Panc1 (cell line): ENCODE measurements at regions of chr7 and their contacts with region 1.

Region 1: DNA sequence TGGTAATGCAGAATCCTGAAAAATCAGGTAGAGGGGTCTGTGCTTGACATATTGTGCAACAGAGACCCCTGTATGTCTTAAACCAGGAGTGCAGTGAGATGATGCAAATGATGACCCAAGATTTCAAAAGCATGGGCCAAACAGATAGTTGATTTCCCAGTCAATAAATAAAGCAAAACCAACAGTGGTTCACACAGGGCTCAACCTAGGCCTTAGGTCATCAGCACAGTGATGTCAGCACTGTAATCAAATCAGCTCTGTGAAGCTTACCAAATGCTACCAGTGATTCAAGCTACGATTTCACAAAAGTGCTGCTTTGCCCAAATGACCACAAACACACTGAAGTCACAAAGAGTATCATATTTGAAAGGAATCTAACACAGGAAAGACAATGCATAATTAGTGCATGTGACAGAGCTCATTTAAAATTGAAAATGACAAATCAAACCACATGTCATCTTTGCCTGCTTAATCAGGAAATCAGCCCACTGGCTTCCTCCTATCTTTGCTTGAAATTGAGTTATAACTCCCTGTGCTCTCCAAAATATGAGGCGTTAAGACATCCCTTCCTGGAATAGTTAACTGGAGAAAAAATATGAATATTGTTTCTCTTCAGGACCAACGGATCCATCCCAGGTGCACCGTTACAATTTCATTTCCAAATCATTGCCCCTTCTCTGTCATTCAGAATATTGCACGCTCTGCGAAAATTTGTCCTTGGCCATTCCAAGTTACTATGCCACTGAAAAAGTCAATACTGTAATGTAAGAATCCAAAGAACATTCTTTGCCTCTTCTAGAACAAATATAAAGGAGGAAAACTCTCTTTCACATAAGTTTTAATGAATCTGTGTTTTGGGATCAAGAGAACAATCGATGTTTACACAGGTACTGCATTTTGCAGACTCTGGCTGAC is 41.9 kb upstream of the ASL start:
- DNase-seq: no peak
- ATAC-seq: no peak
- H3K4me3 ChIP-seq: no peak overlapping the region
- H3K27ac ChIP-seq: no peak overlapping the region
- H3K4me1 ChIP-seq: no peaks in the 10 kb centered on the region
- H3K27me3 ChIP-seq: no peaks in the 10 kb centered on the region
- CTCF ChIP-seq: no peak

Region 2: GRCh38 chr7:65971021-65971420 is 62.7 kb before region 1 on chr7:
- CTCF ChIA-PET with region 1: no interaction called
- POLR2A ChIA-PET with region 1: no interaction called
- in situ Hi-C with region 1: no loop called
- intact Hi-C with region 1: no loop called
- DNase-seq: no peak
- ATAC-seq: no peak
- H3K4me3 ChIP-seq: no peak overlapping the region
- H3K27ac ChIP-seq: no peak overlapping the region
- H3K4me1 ChIP-seq: no peaks in the 10 kb centered on the region
- H3K27me3 ChIP-seq: no peaks in the 10 kb centered on the region
- CTCF ChIP-seq: no peak

Region 3: DNA sequence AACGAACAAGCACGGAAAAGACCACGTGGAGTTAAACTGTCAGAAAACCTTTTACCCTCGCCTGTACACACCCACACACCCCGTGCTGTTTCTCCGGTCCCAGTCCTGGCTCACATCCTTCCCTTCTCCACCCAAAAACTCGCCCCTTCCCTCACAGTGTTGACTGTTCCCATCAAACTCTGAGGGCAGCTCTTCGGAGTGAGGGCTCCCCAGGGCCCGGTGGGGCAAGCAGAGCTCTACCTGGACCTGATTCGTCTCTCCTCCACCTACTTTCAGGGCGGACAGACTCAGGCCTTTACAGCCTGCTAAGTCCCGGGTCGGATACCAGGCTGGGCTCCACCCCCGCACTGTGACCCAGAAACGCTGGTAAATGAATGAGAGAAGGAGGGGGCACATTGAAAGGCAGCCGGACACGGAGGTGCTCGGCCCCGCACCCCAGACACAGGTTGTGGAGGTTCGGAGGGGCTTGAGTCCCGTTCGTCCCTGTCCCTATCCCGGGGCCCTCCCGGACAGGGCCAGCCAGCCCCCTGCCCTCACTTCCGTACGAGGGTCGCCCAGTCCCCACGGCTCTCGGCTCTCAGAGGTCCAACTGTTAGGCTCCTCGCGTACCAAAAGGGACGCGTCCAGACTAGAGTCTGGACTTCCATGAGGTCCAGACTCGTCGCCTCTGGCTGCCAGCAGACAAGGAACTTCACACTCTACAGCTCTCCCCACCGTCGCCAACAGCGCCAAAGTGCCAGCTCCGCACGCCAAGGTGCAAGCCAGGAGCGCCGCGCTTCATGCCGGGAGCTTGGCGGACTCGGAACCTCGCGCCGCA is 10.2 kb after region 1 on chr7:
- CTCF ChIA-PET with region 1: interaction called, 21 read pairs
- POLR2A ChIA-PET with region 1: interaction called, 4 read pairs
- in situ Hi-C with region 1: no loop called
- intact Hi-C with region 1: no loop called
- DNase-seq: no peak
- ATAC-seq: peak; percentile 91
- H3K4me3 ChIP-seq: peak overlapping the region; percentile 42 to 71
- H3K27ac ChIP-seq: peak overlapping the region; percentile 63
- H3K4me1 ChIP-seq: 0 out of 2 replicates have a peak, but pooled peaks cover 3% of the 10 kb centered on the region
- H3K27me3 ChIP-seq: no peaks in the 10 kb centered on the region
- CTCF ChIP-seq: no peak

Region 4: DNA sequence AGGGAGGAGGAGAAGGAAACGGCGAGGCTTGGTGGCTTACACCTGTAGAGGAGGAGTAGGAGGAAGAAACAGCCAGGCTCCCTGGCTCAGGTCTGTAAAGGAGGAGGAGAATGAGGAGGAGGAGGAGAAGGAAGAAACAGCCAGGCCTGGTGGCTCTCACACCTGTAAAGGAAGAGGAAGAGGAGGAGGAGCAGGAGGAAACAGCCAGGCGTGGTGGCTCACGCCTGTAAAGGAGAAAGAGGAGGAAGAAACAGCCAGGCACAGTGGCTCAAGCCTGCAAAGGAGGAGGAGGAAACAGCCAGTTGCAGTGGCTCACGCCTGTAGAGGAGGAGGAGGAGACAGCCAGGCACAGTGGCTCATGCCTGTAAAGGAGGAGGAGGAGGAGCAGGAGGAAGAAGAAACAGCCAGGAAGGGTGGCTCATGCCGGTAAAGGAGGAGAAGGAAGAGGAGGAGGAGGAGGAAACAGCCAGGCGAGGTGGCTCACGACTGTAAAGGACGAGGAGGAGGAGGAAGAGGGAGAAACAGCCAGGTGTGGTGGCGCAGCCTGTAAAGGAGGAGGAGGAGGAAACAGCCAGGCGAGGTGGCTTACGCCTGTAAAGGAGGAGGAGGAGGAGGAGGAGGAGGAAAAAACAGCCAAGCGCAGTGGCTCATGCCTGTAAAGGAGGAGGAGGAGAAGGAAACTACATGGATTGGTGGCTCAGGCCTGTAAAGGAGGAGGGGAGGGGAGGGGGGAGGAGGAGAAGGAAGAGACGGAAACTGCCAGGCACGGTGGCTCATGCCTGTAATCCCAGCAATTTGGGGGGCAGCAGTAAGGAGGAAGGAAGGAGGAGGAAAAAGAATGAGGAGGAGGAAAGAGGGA is 66.1 kb after region 1 on chr7:
- CTCF ChIA-PET with region 1: interaction called, 16 read pairs
- POLR2A ChIA-PET with region 1: no interaction called
- in situ Hi-C with region 1: no loop called
- intact Hi-C with region 1: no loop called
- DNase-seq: no peak
- ATAC-seq: peak; percentile 95
- H3K4me3 ChIP-seq: peak overlapping the region; percentile 48 to 77
- H3K27ac ChIP-seq: peak overlapping the region; percentile 98
- H3K4me1 ChIP-seq: no peaks in the 10 kb centered on the region; the same call in 1 of the 2 replicates
- H3K27me3 ChIP-seq: no peaks in the 10 kb centered on the region
- CTCF ChIP-seq: no peak

Region 5: DNA sequence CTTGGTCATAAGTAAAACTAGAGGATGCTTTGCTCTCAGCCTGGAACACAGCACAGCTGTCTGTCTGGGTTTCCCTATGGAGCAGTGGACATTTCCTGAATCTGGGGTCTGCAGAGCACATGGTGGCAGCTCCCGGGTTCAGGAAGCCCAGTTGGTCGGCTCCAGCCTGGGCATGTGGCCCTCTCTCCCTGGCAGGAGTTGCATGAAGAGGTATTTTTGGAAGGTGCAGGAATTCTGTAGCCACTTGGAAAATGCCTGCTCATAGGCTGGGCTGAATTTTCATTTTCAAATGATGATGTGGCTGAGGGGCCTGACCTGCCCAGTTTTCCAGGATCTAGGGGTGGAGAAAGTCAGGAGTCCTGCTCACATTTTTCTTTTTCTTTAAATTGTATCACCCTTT is 164.7 kb after region 1 on chr7:
- CTCF ChIA-PET with region 1: interaction called, 16 read pairs
- POLR2A ChIA-PET with region 1: no interaction called
- in situ Hi-C with region 1: no loop called
- intact Hi-C with region 1: no loop called
- DNase-seq: no peak
- ATAC-seq: 0 out of 2 replicates have a peak, but pooled peaks have one; percentile 13
- H3K4me3 ChIP-seq: no peak overlapping the region
- H3K27ac ChIP-seq: no peak overlapping the region
- H3K4me1 ChIP-seq: no peaks in the 10 kb centered on the region
- H3K27me3 ChIP-seq: no peaks in the 10 kb centered on the region
- CTCF ChIP-seq: no peak

Region 6: DNA sequence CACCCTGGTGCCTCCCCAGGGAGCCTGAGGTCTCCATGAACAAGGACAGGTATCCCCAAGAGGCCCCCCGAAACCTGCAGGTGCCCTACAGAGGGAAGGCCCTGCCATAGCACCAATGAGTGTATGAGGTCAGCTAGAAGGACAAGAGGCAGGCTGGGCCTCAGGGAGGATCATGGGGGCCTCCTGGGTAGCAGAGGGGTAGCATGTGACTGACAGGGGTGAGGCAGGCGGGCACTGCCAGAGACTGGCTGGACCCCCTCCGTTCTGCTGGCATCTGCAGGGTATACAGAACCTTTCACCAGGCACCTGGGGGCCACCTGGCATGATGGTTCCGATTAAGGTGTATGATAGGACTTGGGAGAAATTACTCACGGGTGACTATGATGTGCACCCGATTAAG is 515.7 kb after region 1 on chr7:
- CTCF ChIA-PET with region 1: interaction called, 12 read pairs
- POLR2A ChIA-PET with region 1: no interaction called
- in situ Hi-C with region 1: no loop called
- intact Hi-C with region 1: no loop called
- DNase-seq: no peak
- ATAC-seq: no peak
- H3K4me3 ChIP-seq: no peak overlapping the region
- H3K27ac ChIP-seq: no peak overlapping the region
- H3K4me1 ChIP-seq: no peaks in the 10 kb centered on the region
- H3K27me3 ChIP-seq: no peaks in the 10 kb centered on the region
- CTCF ChIP-seq: no peak